ENCODE measurements at regions of chr10 and their contacts with region 1.

Region 1: GRCh38 chr10:13440185-13441061 is 88.4 kb downstream of the BEND7 start:
- DNase-seq: peak; percentile 29 to 72 (median 55)
- H3K4me3 ChIP-seq: peak overlapping the region in 1 of 4 donors; percentile 16
- H3K27ac ChIP-seq: no peak overlapping the region
- H3K4me1 ChIP-seq: peaks cover 9 to 12% of the 10 kb centered on the region in 2 donors
- H3K27me3 ChIP-seq: no peaks in the 10 kb centered on the region
- CTCF ChIP-seq: peak; percentile 59 to 88 (median 69)
- POLR2A ChIP-seq: no peak

Region 2: DNA sequence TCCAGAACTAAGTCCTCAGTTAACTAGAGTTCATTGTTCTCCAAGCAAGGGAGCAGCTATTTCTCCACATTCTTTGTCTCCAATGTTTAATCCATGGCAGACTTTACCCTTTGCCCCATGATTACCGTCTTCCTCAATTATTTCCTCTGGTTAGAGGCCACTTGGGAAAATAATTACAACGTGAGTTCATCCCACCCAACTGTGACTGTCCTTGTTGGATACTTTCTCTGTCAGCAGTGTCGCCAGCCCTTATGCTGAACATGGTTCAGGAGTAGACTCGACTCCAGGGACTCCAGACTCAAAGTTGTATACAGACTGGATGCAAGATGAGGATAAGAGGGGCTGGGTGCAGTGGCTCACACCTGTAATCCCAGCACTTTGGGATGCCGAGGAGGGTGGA is 75.2 kb before region 1 on chr10:
- intact Hi-C with region 1: loop called in 1 of 2 experiments (anchors 10 kb)
- DNase-seq: no peak
- H3K4me3 ChIP-seq: no peak overlapping the region
- H3K27ac ChIP-seq: no peak overlapping the region
- H3K4me1 ChIP-seq: no peaks in the 10 kb centered on the region
- H3K27me3 ChIP-seq: peaks cover 4% of the 10 kb centered on the region
- CTCF ChIP-seq: no peak
- POLR2A ChIP-seq: no peak

Region 3: GRCh38 chr10:13485623-13486022 is 45.2 kb after region 1 on chr10:
- intact Hi-C with region 1: no loop called
- DNase-seq: no peak
- H3K4me3 ChIP-seq: no peak overlapping the region
- H3K27ac ChIP-seq: no peak overlapping the region
- H3K4me1 ChIP-seq: no peaks in the 10 kb centered on the region
- H3K27me3 ChIP-seq: no peaks in the 10 kb centered on the region
- CTCF ChIP-seq: peak in 2 of 6 experiments; percentile 24 to 38
- POLR2A ChIP-seq: no peak

Measured in adrenal gland (tissue), 19 donors.